Activated CD8-positive, alpha-beta T cell treated with anti-CD3 and anti-CD28 coated beads, Interleukin-2, amount 10 ng/mL, durations not matched to agents 7 days and 5 days (primary cell): ENCODE measurements at regions of chr10 and their contacts with region 1.

Region 1: GRCh38 chr10:30433730-30434272 is at the start of gene MAP3K8:
- DNase-seq: peak; percentile 85
- ATAC-seq: peak; percentile 80
- H3K4me3 Mint-ChIP-seq: peak within 1 kb of the TSS; percentile 92
- H3K27ac Mint-ChIP-seq: peak within 1 kb of the TSS; percentile 86
- H3K4me1 Mint-ChIP-seq: peaks cover 60% of the 10 kb centered on the region
- H3K27me3 Mint-ChIP-seq: no peaks in the 10 kb centered on the region
- total RNA-seq, gene MAP3K8: 26.0 to 27.7 TPM

Region 2: GRCh38 chr10:30092151-30092790 is 341.5 kb before region 1 on chr10:
- CTCF ChIA-PET with region 1: no interaction called
- POLR2A ChIA-PET with region 1: no interaction called
- DNase-seq: no peak
- ATAC-seq: no peak
- H3K4me3 Mint-ChIP-seq: no peak overlapping the region
- H3K27ac Mint-ChIP-seq: no peak overlapping the region
- H3K4me1 Mint-ChIP-seq: no peaks in the 10 kb centered on the region
- H3K27me3 Mint-ChIP-seq: peaks cover 33% of the 10 kb centered on the region

Region 3: GRCh38 chr10:30284865-30285594 is 148.8 kb before region 1 on chr10:
- CTCF ChIA-PET with region 1: no interaction called
- POLR2A ChIA-PET with region 1: no interaction called
- DNase-seq: no peak
- ATAC-seq: no peak
- H3K4me3 Mint-ChIP-seq: no peak overlapping the region
- H3K27ac Mint-ChIP-seq: no peak overlapping the region
- H3K4me1 Mint-ChIP-seq: peaks cover 7% of the 10 kb centered on the region
- H3K27me3 Mint-ChIP-seq: no peaks in the 10 kb centered on the region

Region 4: GRCh38 chr10:30368065-30368718 is 65.6 kb before region 1 on chr10:
- CTCF ChIA-PET with region 1: no interaction called
- POLR2A ChIA-PET with region 1: no interaction called
- DNase-seq: no peak
- ATAC-seq: no peak
- H3K4me3 Mint-ChIP-seq: no peak overlapping the region
- H3K27ac Mint-ChIP-seq: no peak overlapping the region
- H3K4me1 Mint-ChIP-seq: peaks cover 14% of the 10 kb centered on the region
- H3K27me3 Mint-ChIP-seq: peaks cover 12% of the 10 kb centered on the region

Region 5: GRCh38 chr10:30456266-30456665 is 22.5 kb after region 1 on chr10:
- CTCF ChIA-PET with region 1: interaction called, 17 read pairs
- POLR2A ChIA-PET with region 1: interaction called, 8 read pairs
- DNase-seq: peak; percentile 73
- ATAC-seq: peak; percentile 82
- H3K4me3 Mint-ChIP-seq: peak overlapping the region; percentile 73
- H3K27ac Mint-ChIP-seq: peak overlapping the region; percentile 89
- H3K4me1 Mint-ChIP-seq: peaks cover 51% of the 10 kb centered on the region
- H3K27me3 Mint-ChIP-seq: no peaks in the 10 kb centered on the region